Activated T-helper 2 cell treated with anti-CD3 and anti-CD28 coated beads, Interferon-gamma antibody, Interleukin-2, Interleukin-4, amounts not matched to agents 10 μg/mL and 5 μg/mL and 100 μg/mL, durations not matched to agents 14 hours and 24 hours and 36 hours (primary cell): ENCODE measurements at regions of chr10 and their contacts with region 1.

Region 1: DNA sequence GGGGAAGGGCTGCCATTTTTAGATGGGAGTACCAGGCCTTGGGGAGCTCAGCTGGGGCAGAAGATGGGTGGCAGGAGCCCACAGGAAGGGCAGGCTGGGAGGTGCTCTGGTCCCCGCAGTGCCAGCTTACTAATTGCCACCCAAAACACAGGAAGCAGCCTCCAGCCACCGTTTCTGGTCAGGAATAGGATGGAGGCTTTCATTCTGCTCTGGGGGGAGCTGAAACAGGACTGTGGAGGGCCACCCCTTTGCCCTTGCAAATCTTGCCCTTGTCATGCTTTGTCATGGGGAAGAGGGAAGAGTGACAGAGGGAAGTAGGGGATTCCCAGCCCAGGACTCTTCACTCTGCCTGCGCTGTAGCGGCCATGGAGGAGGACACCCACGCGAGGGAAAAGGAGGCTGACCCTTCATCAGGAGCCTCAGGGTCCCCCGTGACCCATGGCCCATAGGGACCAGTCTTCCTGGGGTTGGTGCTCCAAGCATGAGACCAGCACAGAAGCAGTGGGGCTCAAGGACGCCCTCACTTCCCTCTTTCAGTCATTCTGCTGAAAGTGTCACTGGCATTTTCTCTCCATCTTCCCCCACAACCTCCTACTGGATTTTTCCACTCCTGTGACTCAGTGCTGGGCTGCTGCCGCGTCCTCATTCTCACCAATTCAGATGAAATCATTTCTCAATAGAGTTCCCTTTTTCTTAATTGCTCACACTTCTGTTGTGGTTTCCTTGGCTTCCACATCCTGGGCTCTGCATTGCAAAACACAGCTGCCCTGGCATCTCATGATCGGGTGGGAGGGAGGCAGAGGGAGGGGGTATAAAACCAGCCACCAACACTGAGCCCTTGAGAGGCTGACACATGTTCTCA is 61.9 kb downstream of the MKI67 start:
- DNase-seq: peak; percentile 51
- H3K4me3 Mint-ChIP-seq: peak overlapping the region; percentile 68
- H3K27ac Mint-ChIP-seq: peak overlapping the region; percentile 93
- H3K4me1 Mint-ChIP-seq: peaks cover 60% of the 10 kb centered on the region
- H3K27me3 Mint-ChIP-seq: no peaks in the 10 kb centered on the region

Region 2: DNA sequence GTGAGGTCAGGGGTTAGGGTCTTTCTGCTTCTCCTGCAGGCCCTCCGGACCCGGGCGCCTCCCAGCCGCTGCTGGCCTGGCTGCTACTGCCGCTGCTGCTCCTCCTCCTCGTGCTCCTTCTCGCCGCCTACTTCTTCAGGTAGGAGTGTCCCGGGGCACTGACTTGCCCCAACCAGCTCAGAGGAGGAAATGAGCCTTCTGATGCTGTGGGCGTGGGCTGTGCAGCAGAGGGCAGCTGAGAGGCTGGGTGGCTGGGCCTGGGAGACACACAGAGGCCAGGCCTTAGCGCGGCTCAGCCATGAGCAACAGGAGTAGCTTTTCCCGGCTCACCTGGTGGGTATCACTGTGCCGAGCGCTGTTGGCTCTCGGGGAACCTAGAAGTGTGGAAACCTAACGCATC is 17.0 kb before region 1 on chr10:
- intact Hi-C with region 1: loop called (anchors 1 kb)
- DNase-seq: peak; percentile 83
- H3K4me3 Mint-ChIP-seq: peak overlapping the region; percentile 82
- H3K27ac Mint-ChIP-seq: peak overlapping the region; percentile 88
- H3K4me1 Mint-ChIP-seq: peaks cover 43% of the 10 kb centered on the region
- H3K27me3 Mint-ChIP-seq: no peaks in the 10 kb centered on the region

Region 3: DNA sequence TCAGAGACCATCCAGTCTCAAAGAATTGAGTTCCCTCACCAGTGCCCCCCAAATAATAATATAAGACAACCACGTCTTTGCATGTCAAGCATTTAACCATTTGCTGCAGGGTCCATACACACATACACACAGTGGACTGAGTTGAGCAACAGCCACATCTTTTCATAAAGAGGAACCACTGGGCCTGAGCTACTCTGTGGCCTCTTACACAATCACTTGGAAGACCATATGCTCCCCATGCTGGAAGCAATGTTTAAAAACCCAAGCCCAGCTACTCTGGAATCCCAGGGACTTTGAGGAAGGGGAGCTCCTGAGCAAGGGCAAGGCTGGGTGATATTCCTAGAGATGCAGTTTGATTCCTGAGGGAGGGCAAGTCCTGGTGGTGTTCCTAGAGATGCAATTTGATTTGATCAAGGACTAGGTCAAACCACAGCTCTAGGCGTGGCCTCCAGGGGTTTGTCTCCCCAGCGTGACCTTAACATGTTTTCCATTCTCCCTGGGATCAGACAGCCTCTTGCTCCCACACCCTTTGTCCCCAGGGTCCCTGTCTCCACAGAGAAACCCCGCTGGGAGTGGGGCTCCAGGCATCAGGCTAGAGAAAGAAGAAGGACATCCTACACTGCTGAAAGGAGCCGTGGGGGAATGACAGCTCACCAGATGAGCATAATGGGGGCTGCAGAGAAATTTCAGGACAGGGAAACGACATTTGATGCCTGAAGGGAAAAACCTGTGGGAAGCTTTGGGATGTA is 1026.5 kb after region 1 on chr10:
- intact Hi-C with region 1: no loop called
- DNase-seq: no peak
- H3K4me3 Mint-ChIP-seq: no peak overlapping the region
- H3K27ac Mint-ChIP-seq: no peak overlapping the region
- H3K4me1 Mint-ChIP-seq: no peaks in the 10 kb centered on the region
- H3K27me3 Mint-ChIP-seq: peaks cover 14% of the 10 kb centered on the region